ENCODE measurements at regions of chr10 and their contacts with region 1.

Region 1: GRCh38 chr10:71708301-71708703 is 11.3 kb downstream of the C10orf105 start:
- DNase-seq: peak; percentile 62 to 98
- H3K4me3 ChIP-seq: peak overlapping the region in 1 of 4 experiments; percentile 1; a peak in 1 of 8 replicates
- H3K27ac ChIP-seq: no peak overlapping the region
- H3K4me1 ChIP-seq: peaks cover 0 to 2% (median 0%) of the 10 kb centered on the region in 4 experiments; a peak in 2 of 7 replicates
- H3K27me3 ChIP-seq: peaks cover 0 to 3% (median 0%) of the 10 kb centered on the region in 4 experiments; a peak in 1 of 7 replicates
- CTCF ChIP-seq: peak; percentile 95 to 99 (median 98)
- EP300 ChIP-seq: no peak
- POLR2A ChIP-seq: no peak
- RAD21 ChIP-seq: peak; percentile 98 to 99

Region 2: DNA sequence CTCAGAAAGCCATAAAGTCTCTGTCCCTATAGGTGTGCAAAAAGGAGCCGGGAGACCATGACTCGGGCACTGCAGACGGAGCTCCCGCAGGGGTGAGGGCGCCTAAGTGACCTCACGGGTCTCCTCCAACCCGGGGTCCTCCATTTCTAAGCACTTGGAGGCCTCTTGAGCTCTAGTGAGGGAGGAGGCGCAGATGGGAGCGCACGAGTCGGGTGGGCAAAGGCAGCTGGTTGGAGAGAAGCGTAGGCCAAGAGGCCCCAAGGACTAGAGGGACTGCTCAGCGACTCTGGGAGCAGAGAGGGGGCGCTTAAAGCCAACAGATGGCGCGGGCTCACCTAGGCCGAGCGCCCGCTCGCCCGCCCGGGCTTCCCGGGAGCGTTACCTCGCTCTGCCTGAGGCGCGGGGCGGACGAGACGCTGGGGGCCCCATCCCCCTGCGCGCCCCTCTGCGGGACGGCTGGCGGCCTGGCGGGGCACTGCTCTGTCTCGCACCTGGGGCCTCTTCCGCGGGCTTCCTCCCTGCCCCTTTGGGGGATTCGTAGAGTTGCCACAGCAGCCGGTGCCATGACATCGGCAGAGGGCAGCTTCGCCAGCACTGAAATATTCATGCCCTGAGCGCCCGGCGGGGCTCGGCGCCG is 312.1 kb before region 1 on chr10:
- CTCF ChIA-PET with region 1: interaction called, 61 read pairs
- POLR2A ChIA-PET with region 1: no interaction called
- DNase-seq: peak; percentile 60 to 79
- H3K4me3 ChIP-seq: peak overlapping the region; percentile 54 to 86 (median 62)
- H3K27ac ChIP-seq: no peak overlapping the region
- H3K4me1 ChIP-seq: peaks cover 0 to 18% (median 10%) of the 10 kb centered on the region in 4 experiments; a peak in 6 of 7 replicates
- H3K27me3 ChIP-seq: peaks cover 15 to 50% (median 40%) of the 10 kb centered on the region in 4 experiments
- CTCF ChIP-seq: peak; percentile 55 to 84 (median 71)
- EP300 ChIP-seq: no peak
- POLR2A ChIP-seq: no peak
- RAD21 ChIP-seq: peak; percentile 84 to 88

Region 3: GRCh38 chr10:71547876-71548846 is 160.1 kb before region 1 on chr10:
- CTCF ChIA-PET with region 1: interaction called, 14 read pairs
- POLR2A ChIA-PET with region 1: no interaction called
- DNase-seq: peak in 1 of 2 experiments; percentile 75
- H3K4me3 ChIP-seq: no peak overlapping the region
- H3K27ac ChIP-seq: no peak overlapping the region
- H3K4me1 ChIP-seq: peaks cover 2 to 33% (median 17%) of the 10 kb centered on the region in 4 experiments
- H3K27me3 ChIP-seq: no peaks in the 10 kb centered on the region
- CTCF ChIP-seq: peak; percentile 57 to 71 (median 65)
- EP300 ChIP-seq: no peak
- POLR2A ChIP-seq: no peak
- RAD21 ChIP-seq: peak; percentile 26 to 51; a peak in 3 of 4 replicates

Region 4: DNA sequence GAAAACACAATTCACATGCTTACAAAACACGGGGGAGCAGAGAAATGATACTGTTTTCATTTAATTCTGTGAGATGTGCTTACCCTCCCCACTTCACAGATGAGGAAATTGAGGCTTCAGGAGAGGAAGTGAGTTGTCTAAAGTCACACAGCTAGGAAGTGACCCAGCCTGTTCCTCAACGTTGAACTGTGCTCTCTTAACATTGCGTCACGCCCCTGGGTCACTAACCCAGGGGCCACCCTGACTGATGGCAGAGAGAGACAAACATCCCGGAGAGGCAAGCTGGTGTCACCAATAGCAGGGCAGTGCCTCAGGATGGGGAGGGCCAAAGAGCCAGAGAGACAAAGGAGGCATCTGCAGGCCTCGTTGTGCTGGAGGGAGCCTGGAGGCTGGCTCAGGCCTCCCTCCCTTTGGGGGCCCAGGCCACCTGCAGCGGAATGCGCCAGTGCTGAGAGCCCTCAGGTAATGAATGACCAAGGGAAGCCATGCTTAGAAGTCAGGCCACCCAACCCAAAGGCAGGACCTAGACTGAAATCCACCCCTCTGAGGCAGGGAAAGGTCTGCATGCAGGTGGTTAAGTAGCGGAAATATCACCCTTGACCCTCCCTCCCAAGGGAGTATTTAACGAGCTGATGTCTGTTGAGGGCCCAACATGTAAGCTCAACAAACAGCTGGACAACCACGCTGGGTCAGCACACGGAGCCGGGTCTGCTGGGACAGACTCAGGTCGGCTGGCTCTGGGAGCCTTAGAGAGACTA is 70.1 kb before region 1 on chr10:
- CTCF ChIA-PET with region 1: interaction called, 30 read pairs
- POLR2A ChIA-PET with region 1: no interaction called
- DNase-seq: no peak
- H3K4me3 ChIP-seq: no peak overlapping the region
- H3K27ac ChIP-seq: no peak overlapping the region
- H3K4me1 ChIP-seq: peaks cover 5 to 44% (median 34%) of the 10 kb centered on the region in 4 experiments
- H3K27me3 ChIP-seq: peaks cover 0 to 20% (median 12%) of the 10 kb centered on the region in 4 experiments; a peak in 5 of 7 replicates
- CTCF ChIP-seq: no peak
- EP300 ChIP-seq: no peak
- POLR2A ChIP-seq: no peak
- RAD21 ChIP-seq: no peak

Region 5: DNA sequence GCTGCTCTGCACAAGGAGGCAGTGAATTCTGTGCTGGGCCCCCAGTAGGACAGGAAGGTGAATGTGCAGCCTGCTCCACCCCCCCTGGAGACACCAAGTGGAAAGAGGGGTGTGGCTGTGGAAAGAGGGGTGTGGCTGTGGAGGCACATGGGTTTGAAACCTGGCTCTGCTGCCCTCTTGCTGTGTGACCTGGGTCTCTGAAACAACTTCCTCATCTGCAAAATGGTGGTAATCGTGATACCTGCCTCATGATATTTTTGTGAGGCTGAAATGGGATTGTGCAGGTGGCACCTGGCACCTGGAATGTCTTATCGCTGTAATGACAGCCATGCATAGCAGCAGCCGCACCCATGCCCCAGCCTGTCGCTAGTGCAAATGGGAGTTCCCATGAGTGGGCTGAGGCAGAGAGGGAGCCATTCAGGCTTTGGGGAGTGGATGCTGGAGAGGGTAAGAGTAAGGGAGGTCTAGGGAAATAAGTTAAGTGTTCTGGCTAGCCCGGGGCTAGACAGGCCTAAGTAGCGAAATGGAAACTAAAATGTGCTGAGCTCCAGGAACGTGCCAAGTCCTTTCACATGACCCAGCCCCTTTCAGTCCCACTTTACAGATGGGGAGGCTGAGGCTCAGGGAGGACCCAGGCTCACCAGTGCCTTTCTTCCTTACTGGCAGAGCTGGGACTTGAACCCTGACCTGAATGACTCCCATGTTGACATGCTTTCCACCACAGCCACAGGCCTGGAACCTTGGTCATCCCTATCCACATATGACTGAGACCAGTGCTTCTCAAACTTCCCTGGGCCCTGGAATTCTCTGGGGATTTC is 23.7 kb before region 1 on chr10:
- CTCF ChIA-PET with region 1: interaction called, 169 read pairs
- POLR2A ChIA-PET with region 1: no interaction called
- DNase-seq: no peak
- H3K4me3 ChIP-seq: no peak overlapping the region
- H3K27ac ChIP-seq: no peak overlapping the region
- H3K4me1 ChIP-seq: peaks cover 7 to 25% (median 9%) of the 10 kb centered on the region in 4 experiments
- H3K27me3 ChIP-seq: no peaks in the 10 kb centered on the region; a peak in 1 of 7 replicates
- CTCF ChIP-seq: peak in 1 of 3 experiments; percentile 11; a peak in 1 of 4 replicates
- EP300 ChIP-seq: no peak
- POLR2A ChIP-seq: no peak
- RAD21 ChIP-seq: peak in 1 of 2 experiments; percentile 20; a peak in 3 of 4 replicates

Region 6: DNA sequence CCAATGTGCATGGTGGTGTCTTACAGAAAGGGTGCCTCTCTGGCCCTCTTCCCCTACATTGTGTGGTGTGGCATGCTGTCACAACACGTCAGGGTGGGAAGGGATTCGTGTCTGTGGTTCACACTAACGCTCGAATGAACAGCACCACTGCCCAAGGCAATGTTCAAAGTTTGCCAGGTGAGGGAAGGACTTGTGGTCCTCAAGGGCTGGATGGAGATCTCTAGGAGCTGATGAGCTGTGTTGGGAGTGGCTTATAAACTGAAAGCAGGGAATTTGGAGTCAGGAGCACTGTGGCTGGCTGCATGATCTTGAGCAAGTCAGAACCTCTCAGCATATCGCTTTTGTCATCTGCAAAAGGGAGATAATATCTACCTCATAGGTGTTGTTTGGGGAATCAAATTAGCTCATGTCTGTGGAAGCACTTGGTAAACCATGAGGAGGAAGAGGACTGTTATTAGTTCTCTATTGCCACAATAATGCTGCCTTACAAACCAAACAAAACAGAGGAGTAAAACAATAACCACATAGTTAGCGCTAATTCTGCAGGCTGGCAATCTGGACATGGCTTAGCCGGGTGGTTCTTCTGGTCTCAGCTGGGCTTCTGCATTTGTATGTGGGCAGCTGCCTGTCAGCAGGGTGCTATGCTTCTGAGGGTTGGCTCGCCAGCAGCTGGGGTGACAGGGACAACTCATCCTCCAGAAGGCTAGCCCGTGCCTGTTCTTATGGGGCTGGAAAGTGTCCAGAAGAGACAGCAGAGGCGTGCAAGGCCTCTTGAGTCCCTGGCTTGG is 34.2 kb after region 1 on chr10:
- CTCF ChIA-PET with region 1: interaction called, 15 read pairs
- POLR2A ChIA-PET with region 1: no interaction called
- DNase-seq: no peak
- H3K4me3 ChIP-seq: no peak overlapping the region
- H3K27ac ChIP-seq: no peak overlapping the region
- H3K4me1 ChIP-seq: peaks cover 1 to 5% (median 3%) of the 10 kb centered on the region in 4 experiments; a peak in 4 of 7 replicates
- H3K27me3 ChIP-seq: 0 out of 7 replicates have a peak, but pooled peaks cover 0 to 2% (median 0%) of the 10 kb centered on the region in 4 experiments
- CTCF ChIP-seq: no peak
- EP300 ChIP-seq: no peak
- POLR2A ChIP-seq: no peak
- RAD21 ChIP-seq: no peak

Measured in H1 (cell line).